ENCODE measurements at regions of chr16 and their contacts with region 1.

Region 1: GRCh38 chr16:57807968-57808528 is 5.8 kb upstream of the KIFC3 start:
- DNase-seq: peak; percentile 80
- H3K4me3 ChIP-seq: no peak overlapping the region; the same call in 1 of the 2 replicates
- CTCF ChIP-seq: no peak

Region 2: GRCh38 chr16:57766714-57767348 is 41.2 kb before region 1 on chr16:
- CTCF ChIA-PET with region 1: no interaction called
- POLR2A ChIA-PET with region 1: no interaction called
- DNase-seq: no peak
- H3K4me3 ChIP-seq: no peak overlapping the region
- CTCF ChIP-seq: no peak

Region 3: DNA sequence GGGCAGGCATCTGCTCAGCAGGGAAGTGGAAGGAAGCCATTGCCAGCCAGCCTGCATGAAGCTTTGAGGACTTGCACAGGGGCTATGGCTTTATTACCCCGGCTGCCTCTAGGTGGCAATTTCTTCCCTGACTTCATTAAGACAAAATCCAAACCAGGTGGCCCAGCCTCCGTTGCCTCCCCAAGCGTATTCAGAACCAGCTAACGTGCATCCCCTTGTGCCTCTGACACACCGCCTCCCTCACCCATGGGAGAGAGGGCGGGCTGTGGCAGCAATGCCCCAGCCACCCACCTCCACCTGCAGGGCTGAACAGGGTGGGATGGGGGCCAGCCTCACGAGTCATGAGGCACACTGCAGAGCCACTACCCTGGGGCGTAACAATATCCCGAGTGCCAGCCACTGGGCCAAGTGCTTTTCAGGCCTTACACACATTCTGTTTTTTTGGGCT is 12.6 kb before region 1 on chr16:
- CTCF ChIA-PET with region 1: interaction called, 13 read pairs
- POLR2A ChIA-PET with region 1: no interaction called
- DNase-seq: no peak
- H3K4me3 ChIP-seq: no peak overlapping the region
- CTCF ChIP-seq: peak; percentile 51

Measured in AG04449 (cell line).